Activated CD8-positive, alpha-beta T cell treated with anti-CD3 and anti-CD28 coated beads for 36 hours (primary cell): ENCODE measurements at regions of chr18 and their contacts with region 1.

Region 1: DNA sequence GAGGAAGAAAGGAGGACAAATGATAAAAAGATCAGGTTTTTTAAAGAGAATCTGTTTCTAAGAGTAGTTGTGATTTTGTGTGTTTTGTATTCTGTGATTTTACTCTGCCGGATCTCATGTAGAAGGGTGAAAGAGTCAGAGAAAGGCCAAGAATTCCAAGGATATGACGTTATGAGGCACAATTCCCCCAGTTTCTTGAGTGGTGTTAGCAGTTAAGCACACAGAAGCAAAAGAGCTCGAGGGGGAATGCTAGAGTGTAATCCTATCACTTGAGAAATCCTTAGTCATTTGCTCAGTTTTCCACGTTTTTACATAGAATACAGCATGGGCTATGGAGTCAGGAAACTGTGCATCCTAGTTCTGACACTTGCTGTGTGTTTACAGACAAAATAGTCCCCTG is 34.8 kb downstream of the METTL4 start:
- DNase-seq: no peak
- ATAC-seq: no peak
- H3K4me3 Mint-ChIP-seq: no peak overlapping the region
- H3K27ac Mint-ChIP-seq: no peak overlapping the region
- H3K4me1 Mint-ChIP-seq: no peaks in the 10 kb centered on the region
- H3K27me3 Mint-ChIP-seq: no peaks in the 10 kb centered on the region
- CTCF ChIP-seq: no peak

Region 2: GRCh38 chr18:2104620-2105462 is 431.7 kb before region 1 on chr18:
- CTCF ChIA-PET with region 1: interaction called, 12 read pairs
- POLR2A ChIA-PET with region 1: no interaction called
- intact Hi-C with region 1: loop called (anchors 5 kb)
- DNase-seq: peak; percentile 61
- ATAC-seq: peak; percentile 58
- H3K4me3 Mint-ChIP-seq: no peak overlapping the region
- H3K27ac Mint-ChIP-seq: no peak overlapping the region
- H3K4me1 Mint-ChIP-seq: no peaks in the 10 kb centered on the region
- H3K27me3 Mint-ChIP-seq: peaks cover 5% of the 10 kb centered on the region
- CTCF ChIP-seq: peak; percentile 89

Region 3: GRCh38 chr18:2111456-2111855 is 425.0 kb before region 1 on chr18:
- CTCF ChIA-PET with region 1: interaction called, 12 read pairs
- POLR2A ChIA-PET with region 1: no interaction called
- intact Hi-C with region 1: loop called (anchors 5 kb)
- DNase-seq: no peak
- ATAC-seq: no peak
- H3K4me3 Mint-ChIP-seq: no peak overlapping the region
- H3K27ac Mint-ChIP-seq: no peak overlapping the region
- H3K4me1 Mint-ChIP-seq: no peaks in the 10 kb centered on the region
- H3K27me3 Mint-ChIP-seq: peaks cover 10% of the 10 kb centered on the region
- CTCF ChIP-seq: no peak

Region 4: GRCh38 chr18:2337552-2338141 is 198.8 kb before region 1 on chr18:
- CTCF ChIA-PET with region 1: interaction called, 23 read pairs
- POLR2A ChIA-PET with region 1: no interaction called
- intact Hi-C with region 1: no loop called
- DNase-seq: peak; percentile 70
- ATAC-seq: peak; percentile 74
- H3K4me3 Mint-ChIP-seq: no peak overlapping the region
- H3K27ac Mint-ChIP-seq: no peak overlapping the region
- H3K4me1 Mint-ChIP-seq: peaks cover 6% of the 10 kb centered on the region
- H3K27me3 Mint-ChIP-seq: peaks cover 10% of the 10 kb centered on the region
- CTCF ChIP-seq: peak; percentile 78

Region 5: GRCh38 chr18:2526329-2526728 is 10.2 kb before region 1 on chr18:
- CTCF ChIA-PET with region 1: interaction called, 23 read pairs
- POLR2A ChIA-PET with region 1: interaction called, 3 read pairs
- intact Hi-C with region 1: no loop called
- DNase-seq: no peak
- ATAC-seq: no peak
- H3K4me3 Mint-ChIP-seq: no peak overlapping the region
- H3K27ac Mint-ChIP-seq: no peak overlapping the region
- H3K4me1 Mint-ChIP-seq: no peaks in the 10 kb centered on the region
- H3K27me3 Mint-ChIP-seq: no peaks in the 10 kb centered on the region
- CTCF ChIP-seq: no peak

Region 6: DNA sequence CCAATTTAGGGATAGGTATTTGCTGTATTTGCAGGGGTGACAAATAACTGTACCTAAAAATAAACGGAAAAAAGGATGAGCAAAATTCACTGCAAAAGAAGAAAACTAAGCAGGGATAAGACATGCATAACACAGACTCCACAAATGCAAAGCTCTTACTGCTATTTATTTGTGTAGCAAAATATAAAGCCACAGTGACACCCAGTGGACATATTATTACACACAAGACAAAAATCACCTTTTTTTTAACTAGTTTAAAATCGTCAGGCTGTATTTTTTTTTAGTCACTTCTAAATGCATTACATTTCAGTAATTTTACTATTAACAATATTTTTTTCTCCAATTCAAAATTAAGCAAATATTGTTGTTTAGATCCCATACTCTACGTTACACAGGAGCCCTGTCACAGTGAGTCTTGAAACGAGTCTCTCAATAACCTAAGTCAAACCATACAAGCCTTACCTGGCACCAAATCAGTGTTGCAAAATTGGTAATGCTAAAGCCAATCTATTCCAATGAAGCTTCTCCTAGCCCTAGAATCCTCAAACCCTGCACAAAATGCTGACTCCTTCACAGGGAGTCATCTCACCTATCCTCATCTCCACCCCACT is 11.1 kb after region 1 on chr18:
- CTCF ChIA-PET with region 1: interaction called, 11 read pairs
- POLR2A ChIA-PET with region 1: interaction called, 3 read pairs
- intact Hi-C with region 1: no loop called
- DNase-seq: no peak
- ATAC-seq: peak; percentile 47
- H3K4me3 Mint-ChIP-seq: no peak overlapping the region
- H3K27ac Mint-ChIP-seq: no peak overlapping the region
- H3K4me1 Mint-ChIP-seq: peaks cover 3% of the 10 kb centered on the region
- H3K27me3 Mint-ChIP-seq: no peaks in the 10 kb centered on the region
- CTCF ChIP-seq: peak; percentile 81